ENCODE measurements at regions of chr11 and their contacts with region 1.

Region 1: GRCh38 chr11:207208-207862 is at the starts of genes BET1L and RIC8A:
- DNase-seq: peak; percentile 99
- ATAC-seq: peak; percentile 79
- H3K4me3 ChIP-seq: peak within 1 kb of the TSS; percentile 87 to 98 (median 91)
- H3K4me3 Mint-ChIP-seq: peak within 1 kb of the TSS; percentile 98
- H3K27ac ChIP-seq: peak within 1 kb of the TSS; percentile 96 to 98
- H3K27ac Mint-ChIP-seq: peak within 1 kb of the TSS; percentile 100
- H3K4me1 ChIP-seq: peaks cover 26 to 43% of the 10 kb centered on the region in 2 donors
- H3K4me1 Mint-ChIP-seq: peaks cover 53% of the 10 kb centered on the region
- H3K27me3 ChIP-seq: no peaks in the 10 kb centered on the region
- H3K27me3 Mint-ChIP-seq: no peaks in the 10 kb centered on the region
- CTCF ChIP-seq: no peak
- total RNA-seq, gene BET1L: 69.1 and 72.2 TPM in 2 replicates
- total RNA-seq, gene RIC8A: 102 and 110 TPM in 2 replicates

Region 2: GRCh38 chr11:236774-237767 is 29.7 kb after region 1 on chr11 and contains the start of gene PSMD13:
- CTCF ChIA-PET with region 1: interaction called, 4 read pairs
- POLR2A ChIA-PET with region 1: interaction called, 25 read pairs
- intact Hi-C with region 1: loop called (anchors 1 kb)
- DNase-seq: peak; percentile 91
- ATAC-seq: peak; percentile 77
- H3K4me3 ChIP-seq: peak within 1 kb of the TSS; percentile 89 to 98 (median 95)
- H3K4me3 Mint-ChIP-seq: peak within 1 kb of the TSS; percentile 99
- H3K27ac ChIP-seq: peak within 1 kb of the TSS; percentile 94 to 99
- H3K27ac Mint-ChIP-seq: peak within 1 kb of the TSS; percentile 100
- H3K4me1 ChIP-seq: peaks cover 18 to 22% of the 10 kb centered on the region in 2 donors
- H3K4me1 Mint-ChIP-seq: peaks cover 38% of the 10 kb centered on the region
- H3K27me3 ChIP-seq: no peaks in the 10 kb centered on the region
- H3K27me3 Mint-ChIP-seq: no peaks in the 10 kb centered on the region
- CTCF ChIP-seq: no peak
- total RNA-seq, gene PSMD13: 96.2 and 104 TPM in 2 replicates

Region 3: GRCh38 chr11:406978-407739 is 199.8 kb after region 1 on chr11:
- CTCF ChIA-PET with region 1: interaction called, 5 read pairs
- POLR2A ChIA-PET with region 1: interaction called, 12 read pairs
- intact Hi-C with region 1: loop called (anchors 1 kb)
- DNase-seq: peak; percentile 94
- ATAC-seq: peak; percentile 83
- H3K4me3 ChIP-seq: peak overlapping the region in 4 of 5 experiments; percentile 40 to 63 (median 54)
- H3K4me3 Mint-ChIP-seq: peak overlapping the region; percentile 63
- H3K27ac ChIP-seq: peak overlapping the region; percentile 25 to 67
- H3K27ac Mint-ChIP-seq: peak overlapping the region; percentile 56
- H3K4me1 ChIP-seq: peaks cover 7 to 19% of the 10 kb centered on the region in 2 donors
- H3K4me1 Mint-ChIP-seq: peaks cover 7% of the 10 kb centered on the region
- H3K27me3 ChIP-seq: peaks cover 0 to 11% (median 0%) of the 10 kb centered on the region in 4 experiments
- H3K27me3 Mint-ChIP-seq: no peaks in the 10 kb centered on the region
- CTCF ChIP-seq: no peak

Region 4: DNA sequence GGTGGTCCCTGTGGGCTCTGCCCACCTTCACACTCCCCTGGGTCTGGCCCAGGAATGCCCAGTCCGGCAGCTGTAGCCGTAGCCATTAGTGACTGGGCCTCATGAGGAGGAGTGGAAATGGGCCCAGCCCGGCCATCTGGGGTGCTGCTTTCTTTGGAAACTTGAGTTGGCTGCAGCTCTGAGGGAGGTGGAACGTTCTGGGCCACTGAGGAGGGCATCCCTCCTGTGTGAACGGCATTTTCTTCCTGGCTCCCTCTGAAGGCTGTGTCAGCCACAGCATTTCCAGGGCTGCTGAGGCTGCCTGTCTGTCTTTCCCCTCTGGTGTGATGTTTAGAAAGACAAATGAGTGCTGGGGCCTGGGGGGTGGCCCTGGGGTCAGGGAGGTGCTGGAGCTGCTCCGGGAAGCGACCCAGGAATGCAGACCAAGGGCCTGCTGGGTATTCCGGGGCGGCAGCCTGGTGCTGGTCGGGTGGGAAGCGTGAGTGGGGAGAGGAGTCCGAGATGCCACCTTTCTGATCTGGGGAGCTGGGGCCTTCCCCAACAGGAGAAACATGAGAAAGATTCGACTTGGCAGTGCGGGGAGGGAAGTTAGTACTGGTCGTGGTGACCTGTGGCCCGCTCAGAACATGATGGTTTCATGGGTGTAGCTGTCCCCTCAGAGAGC is 269.8 kb after region 1 on chr11:
- CTCF ChIA-PET with region 1: no interaction called
- POLR2A ChIA-PET with region 1: no interaction called
- intact Hi-C with region 1: no loop called
- DNase-seq: no peak
- ATAC-seq: no peak
- H3K4me3 ChIP-seq: no peak overlapping the region
- H3K4me3 Mint-ChIP-seq: no peak overlapping the region
- H3K27ac ChIP-seq: no peak overlapping the region
- H3K27ac Mint-ChIP-seq: no peak overlapping the region
- H3K4me1 ChIP-seq: no peaks in the 10 kb centered on the region
- H3K4me1 Mint-ChIP-seq: no peaks in the 10 kb centered on the region
- H3K27me3 ChIP-seq: no peaks in the 10 kb centered on the region
- H3K27me3 Mint-ChIP-seq: no peaks in the 10 kb centered on the region
- CTCF ChIP-seq: no peak